Gastrocnemius medialis (tissue), 4 donors: ENCODE measurements at regions of chr5 and their contacts with region 1.

Region 1: GRCh38 chr5:96876292-96876850 is at the start of gene ERAP2:
- DNase-seq: no peak
- ATAC-seq: peak; percentile 68 to 86
- H3K4me3 ChIP-seq: peak within 1 kb of the TSS; percentile 55 to 75 (median 68)
- H3K27ac ChIP-seq: peak within 1 kb of the TSS; percentile 62 to 79 (median 72)
- H3K4me1 ChIP-seq: peaks cover 9 to 15% of the 10 kb centered on the region in 2 donors
- H3K27me3 ChIP-seq: no peaks in the 10 kb centered on the region
- CTCF ChIP-seq: no peak
- POLR2A ChIP-seq: no peak
- total RNA-seq, gene ERAP2: 1.1 to 8.5 (median 2.9) TPM

Region 2: GRCh38 chr5:96756985-96757384 is 119.4 kb before region 1 on chr5:
- in situ Hi-C with region 1: no loop called
- intact Hi-C with region 1: no loop called
- DNase-seq: no peak
- ATAC-seq: no peak
- H3K4me3 ChIP-seq: no peak overlapping the region
- H3K27ac ChIP-seq: no peak overlapping the region
- H3K4me1 ChIP-seq: peaks cover 2 to 3% of the 10 kb centered on the region in 2 donors
- H3K27me3 ChIP-seq: no peaks in the 10 kb centered on the region
- CTCF ChIP-seq: no peak
- POLR2A ChIP-seq: no peak

Region 3: DNA sequence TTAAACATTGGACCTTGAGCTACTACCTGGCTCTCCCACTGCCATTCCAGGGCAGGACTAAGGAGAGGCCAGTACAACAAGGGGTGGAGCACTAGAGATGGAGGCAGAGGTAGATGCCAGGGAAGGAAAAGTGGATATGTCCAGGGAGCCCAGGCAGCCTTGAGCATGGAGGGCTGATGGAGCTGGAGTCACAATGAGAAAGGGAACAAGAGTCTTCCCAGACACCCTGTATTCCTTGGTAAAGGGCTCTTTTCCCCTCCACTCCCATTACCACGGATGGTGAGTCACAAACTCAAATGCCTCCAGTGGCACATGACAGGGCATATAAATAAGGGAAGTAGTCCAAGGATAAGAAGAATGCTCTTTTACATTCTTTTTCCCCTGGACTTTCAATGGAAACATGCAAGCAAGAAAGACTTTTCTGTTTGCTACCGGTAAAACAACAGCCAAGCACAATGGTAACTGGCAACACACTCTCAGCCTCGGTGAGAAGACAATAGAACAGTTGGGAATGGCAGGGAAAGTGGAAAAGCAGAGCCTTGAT is 85.3 kb before region 1 on chr5:
- in situ Hi-C with region 1: no loop called
- intact Hi-C with region 1: no loop called
- DNase-seq: no peak
- ATAC-seq: peak; percentile 27 to 44
- H3K4me3 ChIP-seq: no peak overlapping the region
- H3K27ac ChIP-seq: no peak overlapping the region
- H3K4me1 ChIP-seq: peaks cover 0 to 6% of the 10 kb centered on the region in 2 donors
- H3K27me3 ChIP-seq: no peaks in the 10 kb centered on the region
- CTCF ChIP-seq: no peak
- POLR2A ChIP-seq: no peak

Region 4: DNA sequence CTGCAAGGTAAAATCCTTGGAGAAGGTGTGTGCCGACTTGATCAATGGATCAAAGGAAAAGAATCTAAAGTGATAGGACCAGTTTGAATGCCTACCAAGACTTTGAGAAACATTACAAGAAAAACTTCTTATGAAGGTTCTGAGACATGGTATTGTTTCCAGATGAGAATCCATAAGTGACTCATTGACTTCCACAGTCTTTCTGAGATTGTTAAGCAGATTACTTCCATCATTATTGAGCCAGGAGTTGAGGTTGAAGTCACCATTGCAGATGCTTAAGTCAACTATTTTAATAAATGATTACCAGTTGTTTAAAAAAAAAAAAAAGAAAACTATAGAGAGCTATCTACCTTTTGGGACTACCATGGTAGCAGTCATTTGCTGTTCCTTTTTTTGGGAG is 66.5 kb after region 1 on chr5:
- in situ Hi-C with region 1: loop called in 1 of 4 experiments (anchors 10 kb)
- intact Hi-C with region 1: no loop called
- DNase-seq: no peak
- ATAC-seq: no peak
- H3K4me3 ChIP-seq: no peak overlapping the region
- H3K27ac ChIP-seq: no peak overlapping the region
- H3K4me1 ChIP-seq: peaks cover 50 to 67% of the 10 kb centered on the region in 2 donors
- H3K27me3 ChIP-seq: no peaks in the 10 kb centered on the region
- CTCF ChIP-seq: no peak
- POLR2A ChIP-seq: no peak